ENCODE measurements at regions of chr17 and their contacts with region 1.

Region 1: DNA sequence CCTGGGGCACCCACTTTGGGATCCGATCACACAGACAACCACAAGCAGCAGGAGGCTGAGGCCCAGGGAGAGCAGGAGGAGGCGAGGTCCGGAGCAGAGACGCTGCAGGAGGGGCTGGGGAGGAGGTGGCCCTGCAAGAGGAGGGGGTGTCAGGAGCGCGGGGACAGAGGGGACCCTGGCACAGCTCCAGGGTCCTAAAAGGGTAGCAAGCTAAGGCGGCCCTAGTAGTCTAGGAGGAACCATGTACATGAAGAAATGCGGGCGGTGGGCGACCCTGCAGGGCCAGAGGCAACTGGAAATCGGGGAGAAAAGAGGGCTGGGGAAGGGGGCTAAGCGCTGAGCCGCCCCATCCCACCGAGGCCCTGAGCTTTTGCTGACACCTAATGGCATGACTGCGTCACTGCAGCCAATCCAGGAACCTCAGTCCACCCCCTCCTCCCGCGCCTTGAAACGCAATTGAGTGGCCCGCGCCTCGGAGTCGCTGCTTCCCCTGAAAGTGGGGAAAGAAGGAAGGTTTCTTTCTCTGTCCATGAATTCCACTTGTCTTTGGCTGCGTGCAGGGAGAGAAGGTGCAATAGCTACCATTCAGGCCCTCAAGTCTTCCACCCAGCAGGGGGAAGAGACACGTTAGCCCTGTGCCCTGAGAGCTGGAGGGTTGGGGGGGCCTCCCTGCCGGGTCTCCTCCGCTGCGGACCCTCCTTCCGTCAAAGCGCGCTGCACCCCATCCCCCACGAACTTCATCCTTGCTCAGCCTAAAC is 1.8 kb downstream of the ASGR1 start:
- DNase-seq: peak; percentile 37
- H3K4me3 ChIP-seq: peak overlapping the region; percentile 15 to 35 (median 20)
- H3K27ac ChIP-seq: no peak overlapping the region
- H3K4me1 ChIP-seq: peaks cover 7% of the 10 kb centered on the region
- H3K27me3 ChIP-seq: peaks cover 3% of the 10 kb centered on the region
- CTCF ChIP-seq: peak; percentile 81 to 85

Region 2: GRCh38 chr17:5191541-5192417 is 1985.6 kb before region 1 on chr17 and contains the start of gene ZNF594:
- CTCF ChIA-PET with region 1: interaction called, 16 read pairs
- dilution Hi-C with region 1: no loop called
- in situ Hi-C with region 1: no loop called
- intact Hi-C with region 1: no loop called
- DNase-seq: peak; percentile 91
- H3K4me3 ChIP-seq: peak within 1 kb of the TSS; percentile 68 to 85 (median 78)
- H3K27ac ChIP-seq: peak within 1 kb of the TSS; percentile 41
- H3K4me1 ChIP-seq: no peaks in the 10 kb centered on the region
- H3K27me3 ChIP-seq: no peaks in the 10 kb centered on the region
- CTCF ChIP-seq: peak; percentile 55 to 80
- total RNA-seq, gene ZNF594: 4.8 to 5.8 TPM

Region 3: GRCh38 chr17:7056386-7056785 is 121.0 kb before region 1 on chr17:
- CTCF ChIA-PET with region 1: interaction called, 5 read pairs
- dilution Hi-C with region 1: no loop called
- in situ Hi-C with region 1: no loop called
- intact Hi-C with region 1: loop called (anchors 1 kb)
- DNase-seq: peak; percentile 86
- H3K4me3 ChIP-seq: no peak overlapping the region
- H3K27ac ChIP-seq: no peak overlapping the region
- H3K4me1 ChIP-seq: peaks cover 23% of the 10 kb centered on the region
- H3K27me3 ChIP-seq: no peaks in the 10 kb centered on the region
- CTCF ChIP-seq: no peak

Region 4: DNA sequence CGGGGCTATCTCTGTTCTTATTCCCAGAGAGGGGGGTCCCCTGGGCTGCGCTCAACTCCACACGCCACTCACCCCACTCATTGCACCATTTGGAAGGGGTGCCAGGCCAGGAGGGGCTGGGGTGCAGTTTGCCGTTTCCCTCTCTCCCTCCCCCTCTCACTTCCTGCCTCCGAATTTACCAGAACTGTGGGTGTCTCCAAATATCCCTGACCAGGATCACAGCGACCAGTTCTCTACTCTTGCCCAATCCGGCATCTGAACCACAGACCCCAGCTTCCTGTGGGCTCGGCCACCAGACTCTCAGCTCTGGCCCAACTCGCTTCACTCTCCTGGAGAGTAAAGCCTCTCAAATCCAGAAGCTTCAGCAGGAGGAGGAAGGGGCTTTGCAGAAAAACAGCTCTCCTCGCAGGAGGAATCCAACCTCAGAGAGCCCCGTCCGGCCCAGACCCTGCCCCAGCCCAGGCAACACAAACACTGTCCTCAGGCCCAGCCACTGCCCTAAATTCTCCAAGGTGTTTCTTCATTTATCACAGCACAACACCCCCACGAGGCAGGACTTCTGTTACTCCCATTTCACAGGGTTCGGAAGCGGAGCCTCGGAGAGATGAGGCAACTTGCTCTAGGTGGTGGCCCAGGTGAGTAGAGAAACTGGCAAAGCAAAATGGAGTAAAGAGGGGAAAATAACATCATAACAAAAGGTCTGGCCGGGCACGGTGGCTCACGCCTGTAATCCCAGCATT is 62.3 kb before region 1 on chr17:
- CTCF ChIA-PET with region 1: no interaction called
- dilution Hi-C with region 1: loop called (anchors 5 kb)
- in situ Hi-C with region 1: no loop called
- intact Hi-C with region 1: no loop called
- DNase-seq: no peak
- H3K4me3 ChIP-seq: no peak overlapping the region
- H3K27ac ChIP-seq: no peak overlapping the region
- H3K4me1 ChIP-seq: no peaks in the 10 kb centered on the region
- H3K27me3 ChIP-seq: peaks cover 3% of the 10 kb centered on the region
- CTCF ChIP-seq: no peak

Region 5: DNA sequence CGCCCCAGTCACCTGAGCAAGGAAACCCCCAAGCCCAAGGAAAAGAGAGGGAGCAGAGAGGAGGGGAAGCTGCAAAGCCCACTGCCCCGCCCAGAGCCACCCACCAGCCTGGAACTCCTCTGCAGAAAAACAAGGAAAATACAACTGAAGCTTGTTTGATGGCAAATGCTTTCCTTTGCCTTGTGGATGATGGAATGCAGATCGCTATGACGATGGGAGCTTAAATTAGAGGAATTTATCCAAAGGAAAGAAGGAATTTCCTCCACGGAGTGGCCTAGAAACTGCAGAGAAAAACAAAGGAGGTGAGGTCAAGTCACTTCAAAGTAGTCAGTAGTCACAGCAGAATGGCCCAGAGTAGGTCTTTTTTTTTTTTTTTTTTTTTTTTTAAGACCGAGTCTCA is 31.3 kb before region 1 on chr17:
- CTCF ChIA-PET with region 1: interaction called, 10 read pairs
- dilution Hi-C with region 1: no loop called
- in situ Hi-C with region 1: no loop called
- intact Hi-C with region 1: no loop called
- DNase-seq: no peak
- H3K4me3 ChIP-seq: no peak overlapping the region
- H3K27ac ChIP-seq: no peak overlapping the region
- H3K4me1 ChIP-seq: no peaks in the 10 kb centered on the region
- H3K27me3 ChIP-seq: no peaks in the 10 kb centered on the region
- CTCF ChIP-seq: no peak

Region 6: GRCh38 chr17:7266784-7267183 is 89.4 kb after region 1 on chr17:
- CTCF ChIA-PET with region 1: no interaction called
- dilution Hi-C with region 1: no loop called
- in situ Hi-C with region 1: no loop called
- intact Hi-C with region 1: no loop called
- DNase-seq: no peak
- H3K4me3 ChIP-seq: no peak overlapping the region
- H3K27ac ChIP-seq: no peak overlapping the region
- H3K4me1 ChIP-seq: peaks cover 16% of the 10 kb centered on the region
- H3K27me3 ChIP-seq: no peaks in the 10 kb centered on the region
- CTCF ChIP-seq: no peak

Region 7: DNA sequence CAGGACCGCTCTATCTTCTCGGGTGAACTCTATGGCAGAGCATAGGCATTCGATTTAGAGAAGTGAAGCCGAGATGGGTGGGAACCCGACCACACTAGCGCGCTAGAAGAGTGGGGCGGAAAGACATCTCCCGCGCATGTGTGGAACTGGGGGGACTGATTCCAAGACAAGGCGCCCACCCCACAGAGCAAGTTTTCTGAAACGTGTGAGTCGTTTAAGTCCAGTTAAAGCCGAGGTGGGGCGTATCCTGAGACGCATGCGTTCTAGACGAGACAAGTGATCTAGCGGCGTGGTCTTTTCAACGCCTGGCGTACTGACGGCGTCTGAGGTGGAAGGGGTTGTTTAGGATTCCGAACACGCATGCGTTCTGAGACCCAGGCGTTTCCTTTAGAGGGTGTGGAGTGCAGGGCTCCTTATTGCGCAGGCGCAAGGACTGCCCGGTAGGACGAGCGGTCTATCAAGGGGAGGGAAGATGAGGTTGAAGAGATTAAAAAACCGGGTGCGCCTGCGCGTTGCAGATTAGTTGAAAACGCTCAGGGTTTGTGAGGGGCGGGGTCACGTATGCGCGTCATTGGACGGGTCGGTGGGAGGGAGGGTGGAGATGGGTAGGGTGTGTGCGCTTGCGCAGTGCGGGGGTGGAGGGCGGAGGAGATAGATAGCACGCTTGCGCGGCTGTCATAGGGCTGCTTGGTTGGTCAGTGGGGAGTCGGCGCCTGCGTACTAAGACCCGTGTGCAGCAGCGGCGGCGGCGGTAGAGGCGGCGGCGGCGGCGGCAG is 129.7 kb after region 1 on chr17 and contains the start of gene EIF5A:
- CTCF ChIA-PET with region 1: no interaction called
- dilution Hi-C with region 1: loop called (anchors 5 kb)
- in situ Hi-C with region 1: no loop called
- intact Hi-C with region 1: no loop called
- DNase-seq: peak; percentile 100
- H3K4me3 ChIP-seq: peak within 1 kb of the TSS; percentile 79 to 91 (median 80)
- H3K27ac ChIP-seq: peak within 1 kb of the TSS; percentile 91
- H3K4me1 ChIP-seq: peaks cover 24% of the 10 kb centered on the region
- H3K27me3 ChIP-seq: no peaks in the 10 kb centered on the region
- CTCF ChIP-seq: no peak
- total RNA-seq, gene EIF5A: 597 to 1,021 TPM

Region 8: DNA sequence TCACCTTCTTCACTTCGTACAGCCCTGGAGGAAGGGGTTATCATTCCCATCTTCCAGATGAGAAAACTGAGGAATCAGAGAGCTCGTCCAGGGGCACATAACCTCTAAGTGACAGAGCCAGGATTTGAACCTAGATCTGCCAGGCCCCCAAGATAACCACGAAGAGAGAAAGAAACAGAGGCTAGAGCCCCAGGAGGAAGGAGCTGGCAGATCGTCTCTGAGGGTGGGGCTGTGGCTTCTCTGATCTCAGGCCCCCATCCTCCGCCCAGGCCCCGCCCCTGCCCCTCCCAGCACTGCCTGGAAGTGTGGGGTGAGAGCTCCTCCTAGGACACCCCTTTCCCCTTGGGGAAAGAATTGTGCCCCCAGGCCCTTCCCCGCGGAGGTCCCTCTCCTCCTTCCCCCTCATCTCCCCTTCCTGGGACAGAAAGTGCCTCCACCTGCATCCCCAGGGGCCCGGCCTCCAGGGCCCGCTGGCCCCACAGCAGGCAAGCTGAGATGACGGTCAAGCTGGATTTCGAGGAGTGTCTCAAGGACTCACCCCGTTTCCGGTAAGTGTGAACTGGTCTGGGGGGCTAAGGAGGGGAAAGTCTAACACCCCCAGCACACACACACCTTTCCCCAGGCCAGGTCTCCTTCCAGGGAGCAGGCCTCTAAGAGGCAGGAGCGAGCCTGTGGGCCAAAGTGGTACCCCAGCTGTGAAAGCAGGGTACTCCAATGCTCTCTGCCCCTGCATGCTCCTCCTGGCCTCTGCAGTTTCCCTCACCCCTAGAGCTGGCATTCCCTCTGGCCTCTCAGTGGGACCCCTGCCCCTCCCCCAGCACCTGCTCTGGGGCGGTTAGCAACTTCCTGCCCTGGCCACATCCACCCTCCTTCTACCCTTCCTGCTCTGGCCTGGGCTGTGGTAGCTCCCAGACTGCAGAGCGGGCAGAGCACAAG is 159.1 kb after region 1 on chr17 and contains the start of gene ACAP1:
- CTCF ChIA-PET with region 1: no interaction called
- dilution Hi-C with region 1: no loop called
- in situ Hi-C with region 1: no loop called
- intact Hi-C with region 1: no loop called
- DNase-seq: no peak
- H3K4me3 ChIP-seq: no peak within 1 kb of the TSS
- H3K27ac ChIP-seq: no peak within 1 kb of the TSS
- H3K4me1 ChIP-seq: no peaks in the 10 kb centered on the region
- H3K27me3 ChIP-seq: peaks cover 3% of the 10 kb centered on the region
- CTCF ChIP-seq: no peak
- total RNA-seq, gene ACAP1: 2.0 to 4.7 TPM